Activated naive CD4-positive, alpha-beta T cell treated with anti-CD3 and anti-CD28 coated beads for 36 hours (primary cell): ENCODE measurements at regions of chr1 and their contacts with region 1.

Region 1: DNA sequence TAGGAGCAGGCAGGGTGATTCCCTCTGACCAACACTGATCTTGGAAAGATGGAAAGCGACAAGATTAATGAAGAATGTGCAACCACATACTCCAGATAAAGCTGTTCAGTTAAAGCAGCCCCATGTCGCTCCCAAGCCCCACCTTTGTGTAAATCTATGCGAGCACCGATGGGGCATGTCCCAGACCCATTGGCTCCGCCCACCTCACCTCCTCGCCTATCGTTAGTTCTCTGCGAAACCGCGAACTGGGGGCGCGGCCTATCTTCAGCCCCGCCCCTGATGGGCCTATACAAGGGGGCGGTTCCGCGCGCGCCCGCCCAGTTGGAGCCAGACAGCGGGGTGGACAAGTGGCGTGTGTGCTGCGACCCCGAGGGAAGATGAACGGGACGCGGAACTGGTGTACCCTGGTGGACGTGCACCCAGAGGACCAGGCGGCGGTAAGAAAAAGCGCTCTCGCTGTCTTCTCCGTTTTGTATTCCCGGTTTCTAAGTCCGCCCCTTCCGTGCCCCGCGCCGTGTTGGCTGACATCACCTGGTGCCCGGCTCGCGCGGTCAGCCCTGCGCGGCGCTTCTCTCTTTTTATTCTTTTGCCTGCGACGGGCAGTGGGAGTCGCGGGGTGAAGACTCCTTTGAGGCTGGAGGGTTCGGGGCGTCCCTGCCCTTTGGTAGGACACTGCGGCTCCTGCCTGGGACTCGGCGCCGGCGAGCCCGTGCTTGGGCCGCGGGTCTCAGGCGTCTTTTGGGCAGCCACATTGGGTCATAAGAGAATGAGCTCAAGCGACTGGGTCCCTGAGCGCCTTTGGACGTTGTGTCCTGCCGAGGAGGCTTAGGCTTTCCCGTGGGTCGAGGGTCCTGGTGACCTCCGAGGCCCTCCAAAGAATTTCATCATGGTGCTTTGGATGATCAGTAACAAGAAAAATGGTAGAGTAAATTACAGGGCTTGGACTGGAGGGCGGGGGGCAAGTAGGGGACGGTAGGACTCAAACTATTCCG is at the start of gene TUFT1:
- DNase-seq: peak; percentile 95
- H3K4me3 Mint-ChIP-seq: peak within 1 kb of the TSS; percentile 84
- H3K27ac Mint-ChIP-seq: no peak within 1 kb of the TSS
- H3K4me1 Mint-ChIP-seq: peaks cover 14% of the 10 kb centered on the region
- H3K27me3 Mint-ChIP-seq: peaks cover 3% of the 10 kb centered on the region
- total RNA-seq, gene TUFT1: 2.3 to 2.8 TPM

Region 2: DNA sequence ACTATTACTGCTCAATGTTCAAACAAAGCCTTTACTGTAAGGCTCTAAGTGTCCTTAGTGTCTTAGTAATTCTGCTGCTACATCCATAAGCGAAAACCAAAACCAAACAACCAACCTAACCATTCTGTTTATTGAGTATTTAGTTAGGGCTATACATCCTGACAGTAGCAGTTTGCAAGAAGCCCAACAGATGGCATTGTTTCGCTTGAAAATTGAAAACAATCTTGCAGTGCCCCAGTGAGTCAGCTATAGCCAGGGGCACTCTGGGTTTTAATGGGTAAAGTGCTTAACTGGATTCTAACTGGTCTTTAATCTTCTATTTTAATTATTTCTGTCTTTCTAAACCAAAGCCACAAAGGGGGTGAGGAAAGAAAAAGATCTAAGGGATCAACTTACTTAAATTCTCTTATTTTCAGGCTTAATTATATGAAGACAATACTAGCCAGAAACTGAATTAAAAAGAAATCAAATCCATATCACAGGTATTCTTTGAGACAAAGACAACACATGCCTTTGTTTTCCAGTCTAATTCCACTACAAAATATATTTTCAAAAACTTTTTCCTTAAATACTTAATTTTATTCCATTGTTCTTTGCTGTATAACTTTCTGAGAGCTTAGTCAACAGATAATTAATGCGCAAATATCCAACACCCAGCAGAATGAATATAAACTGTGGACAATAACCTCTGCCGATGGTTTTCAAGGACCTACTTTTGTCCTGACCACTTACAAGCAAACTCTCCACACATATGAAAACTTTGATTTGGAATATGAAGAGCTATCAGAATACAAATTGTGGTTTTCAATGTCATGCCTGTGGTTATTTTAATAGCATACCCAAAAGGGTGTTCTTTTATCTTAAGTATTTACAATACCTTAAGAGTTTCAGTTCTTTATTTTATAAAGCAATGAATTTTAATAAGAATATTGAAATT is 96.2 kb before region 1 on chr1:
- CTCF ChIA-PET with region 1: interaction called, 3 read pairs
- intact Hi-C with region 1: loop called (anchors 5 kb)
- DNase-seq: peak; percentile 85
- H3K4me3 Mint-ChIP-seq: no peak overlapping the region
- H3K27ac Mint-ChIP-seq: no peak overlapping the region
- H3K4me1 Mint-ChIP-seq: peaks cover 53% of the 10 kb centered on the region
- H3K27me3 Mint-ChIP-seq: no peaks in the 10 kb centered on the region

Region 3: GRCh38 chr1:151510957-151511635 is 29.2 kb before region 1 on chr1 and contains the start of gene CGN:
- CTCF ChIA-PET with region 1: interaction called, 8 read pairs
- intact Hi-C with region 1: loop called (anchors 2 kb)
- DNase-seq: peak; percentile 87
- H3K4me3 Mint-ChIP-seq: peak within 1 kb of the TSS; percentile 80
- H3K27ac Mint-ChIP-seq: no peak within 1 kb of the TSS
- H3K4me1 Mint-ChIP-seq: peaks cover 25% of the 10 kb centered on the region
- H3K27me3 Mint-ChIP-seq: no peaks in the 10 kb centered on the region
- total RNA-seq, gene CGN: 0.62 to 1.5 TPM

Region 4: GRCh38 chr1:151720974-151721787 is 180.9 kb after region 1 on chr1 and contains the start of gene RIIAD1:
- CTCF ChIA-PET with region 1: no interaction called
- intact Hi-C with region 1: loop called (anchors 5 kb)
- DNase-seq: peak; percentile 31
- H3K4me3 Mint-ChIP-seq: peak within 1 kb of the TSS; percentile 69
- H3K27ac Mint-ChIP-seq: no peak within 1 kb of the TSS
- H3K4me1 Mint-ChIP-seq: peaks cover 19% of the 10 kb centered on the region
- H3K27me3 Mint-ChIP-seq: peaks cover 57% of the 10 kb centered on the region
- total RNA-seq, gene RIIAD1: not detected

Region 5: DNA sequence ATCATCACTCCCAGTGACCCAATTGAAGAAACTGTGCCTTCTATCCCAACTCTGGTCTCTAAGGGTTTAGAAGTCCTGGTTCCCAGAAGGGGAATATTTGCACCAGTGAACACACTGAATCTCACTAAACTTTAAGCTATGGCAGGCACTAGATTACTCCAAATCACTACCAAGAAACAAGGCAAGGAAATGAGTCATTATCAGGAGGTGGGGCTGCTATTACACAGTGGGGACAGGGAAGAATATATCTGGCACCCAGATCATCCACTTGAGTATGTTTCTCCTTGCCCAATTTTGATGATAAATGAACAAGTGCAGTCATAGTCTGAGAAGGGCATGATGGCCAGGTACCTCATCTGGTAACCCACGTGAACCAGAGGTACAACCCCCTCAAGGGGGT is 216.0 kb after region 1 on chr1:
- CTCF ChIA-PET with region 1: no interaction called
- intact Hi-C with region 1: no loop called
- DNase-seq: peak; percentile 26
- H3K4me3 Mint-ChIP-seq: no peak overlapping the region
- H3K27ac Mint-ChIP-seq: peak overlapping the region; percentile 22
- H3K4me1 Mint-ChIP-seq: peaks cover 13% of the 10 kb centered on the region
- H3K27me3 Mint-ChIP-seq: no peaks in the 10 kb centered on the region

Region 6: DNA sequence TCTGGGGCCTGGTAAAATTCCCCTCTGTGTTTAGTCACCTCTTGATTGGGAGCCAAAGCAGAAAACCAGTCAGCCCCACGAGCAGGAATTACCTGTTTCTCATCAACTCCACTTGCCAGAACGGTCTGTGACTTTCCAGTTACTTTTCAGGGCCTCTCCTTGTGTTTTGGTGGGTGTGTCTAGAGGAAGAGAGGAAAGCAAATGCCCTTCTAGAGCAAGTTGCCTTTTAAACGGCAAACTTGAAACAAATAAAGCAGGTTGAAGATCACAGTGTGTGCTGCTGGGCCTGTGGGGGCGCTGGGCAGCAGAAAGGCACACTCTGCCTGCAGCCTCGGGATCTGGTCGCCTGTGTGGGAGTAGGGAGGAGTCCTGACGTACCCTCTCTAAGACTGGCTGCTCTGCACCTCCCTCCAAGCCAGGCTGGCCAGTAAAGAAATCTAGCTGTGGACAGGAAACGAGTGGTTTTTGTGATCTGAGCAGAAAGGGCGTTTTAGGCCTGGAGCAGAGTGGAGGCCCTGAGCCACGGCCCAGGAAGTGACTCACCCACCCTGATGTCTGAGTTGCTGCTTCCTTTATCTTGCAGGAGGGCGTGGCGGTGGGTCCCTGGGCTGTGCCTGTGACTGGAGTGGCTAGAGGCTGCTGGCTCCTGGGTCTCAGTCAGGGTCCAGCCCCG is 507.6 kb after region 1 on chr1:
- CTCF ChIA-PET with region 1: no interaction called
- intact Hi-C with region 1: no loop called
- DNase-seq: peak; percentile 94
- H3K4me3 Mint-ChIP-seq: peak overlapping the region; percentile 67
- H3K27ac Mint-ChIP-seq: peak overlapping the region; percentile 98
- H3K4me1 Mint-ChIP-seq: peaks cover 19% of the 10 kb centered on the region
- H3K27me3 Mint-ChIP-seq: peaks cover 2% of the 10 kb centered on the region